CD8-positive, alpha-beta T cell (primary cell): ENCODE measurements at regions of chr10 and their contacts with region 1.

Region 1: DNA sequence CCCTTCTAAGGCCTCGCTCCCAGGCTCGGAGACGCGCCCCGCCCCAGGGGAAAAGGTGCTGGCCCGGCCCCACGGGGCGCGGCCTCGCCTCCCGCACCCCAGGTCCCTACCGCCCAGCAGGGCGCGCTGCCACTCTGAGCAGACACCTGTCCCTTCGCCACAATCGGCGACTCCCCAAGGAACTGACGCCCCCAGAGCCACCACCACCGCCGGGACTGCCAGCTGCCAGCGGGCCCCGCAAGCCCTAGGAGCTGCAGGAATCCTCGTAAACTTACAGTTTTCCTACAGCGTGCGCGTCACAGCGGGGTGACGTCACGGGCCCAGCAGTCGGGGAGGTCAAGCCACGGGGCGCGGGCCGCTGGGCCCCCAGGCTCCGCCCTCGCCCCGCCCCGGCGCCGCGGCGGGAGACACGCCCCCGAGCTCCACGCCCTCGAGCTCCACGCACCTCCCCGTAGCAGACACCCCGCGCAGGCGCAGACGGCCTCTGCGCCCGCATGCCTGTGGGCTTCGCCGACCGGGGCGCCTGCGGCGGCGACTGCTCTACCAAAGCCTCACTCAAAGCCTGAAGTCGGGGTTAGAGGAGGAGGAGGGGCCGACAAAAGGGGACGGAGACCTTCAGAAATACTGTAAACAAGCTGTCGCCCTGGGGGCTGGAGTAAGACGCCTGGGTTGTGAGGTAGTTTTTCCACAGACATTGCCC is at the start of gene ZNF438:
- DNase-seq: peak; percentile 91 to 98 (median 95)
- ATAC-seq: peak; percentile 81
- H3K4me3 ChIP-seq: peak within 1 kb of the TSS; percentile 74 to 98
- H3K4me3 Mint-ChIP-seq: peak within 1 kb of the TSS; percentile 90
- H3K27ac ChIP-seq: peak within 1 kb of the TSS; percentile 99 to 100
- H3K27ac Mint-ChIP-seq: peak within 1 kb of the TSS; percentile 99
- H3K4me1 ChIP-seq: peaks cover 20% of the 10 kb centered on the region
- H3K4me1 Mint-ChIP-seq: peaks cover 21% of the 10 kb centered on the region
- H3K27me3 ChIP-seq: no peaks in the 10 kb centered on the region
- H3K27me3 Mint-ChIP-seq: no peaks in the 10 kb centered on the region
- CTCF ChIP-seq: peak; percentile 59
- total RNA-seq, gene ZNF438: 1.5 to 1.7 TPM

Region 2: GRCh38 chr10:30155401-30155800 is 876.3 kb before region 1 on chr10:
- CTCF ChIA-PET with region 1: no interaction called
- POLR2A ChIA-PET with region 1: no interaction called
- intact Hi-C with region 1: no loop called
- DNase-seq: no peak
- ATAC-seq: no peak
- H3K4me3 ChIP-seq: no peak overlapping the region
- H3K4me3 Mint-ChIP-seq: no peak overlapping the region
- H3K27ac ChIP-seq: no peak overlapping the region
- H3K27ac Mint-ChIP-seq: no peak overlapping the region
- H3K4me1 ChIP-seq: no peaks in the 10 kb centered on the region
- H3K4me1 Mint-ChIP-seq: no peaks in the 10 kb centered on the region
- H3K27me3 ChIP-seq: no peaks in the 10 kb centered on the region
- H3K27me3 Mint-ChIP-seq: peaks cover 48% of the 10 kb centered on the region
- CTCF ChIP-seq: no peak

Region 3: GRCh38 chr10:30701451-30702173 is 330.1 kb before region 1 on chr10:
- CTCF ChIA-PET with region 1: no interaction called
- POLR2A ChIA-PET with region 1: interaction called, 3 read pairs
- intact Hi-C with region 1: loop called (anchors 5 kb)
- DNase-seq: peak; percentile 41 to 92 (median 74)
- ATAC-seq: peak; percentile 70
- H3K4me3 ChIP-seq: peak overlapping the region; percentile 1 to 43
- H3K4me3 Mint-ChIP-seq: peak overlapping the region; percentile 78
- H3K27ac ChIP-seq: peak overlapping the region; percentile 48 to 81
- H3K27ac Mint-ChIP-seq: peak overlapping the region; percentile 95
- H3K4me1 ChIP-seq: peaks cover 74% of the 10 kb centered on the region
- H3K4me1 Mint-ChIP-seq: peaks cover 83% of the 10 kb centered on the region
- H3K27me3 ChIP-seq: no peaks in the 10 kb centered on the region
- H3K27me3 Mint-ChIP-seq: no peaks in the 10 kb centered on the region
- CTCF ChIP-seq: no peak

Region 4: DNA sequence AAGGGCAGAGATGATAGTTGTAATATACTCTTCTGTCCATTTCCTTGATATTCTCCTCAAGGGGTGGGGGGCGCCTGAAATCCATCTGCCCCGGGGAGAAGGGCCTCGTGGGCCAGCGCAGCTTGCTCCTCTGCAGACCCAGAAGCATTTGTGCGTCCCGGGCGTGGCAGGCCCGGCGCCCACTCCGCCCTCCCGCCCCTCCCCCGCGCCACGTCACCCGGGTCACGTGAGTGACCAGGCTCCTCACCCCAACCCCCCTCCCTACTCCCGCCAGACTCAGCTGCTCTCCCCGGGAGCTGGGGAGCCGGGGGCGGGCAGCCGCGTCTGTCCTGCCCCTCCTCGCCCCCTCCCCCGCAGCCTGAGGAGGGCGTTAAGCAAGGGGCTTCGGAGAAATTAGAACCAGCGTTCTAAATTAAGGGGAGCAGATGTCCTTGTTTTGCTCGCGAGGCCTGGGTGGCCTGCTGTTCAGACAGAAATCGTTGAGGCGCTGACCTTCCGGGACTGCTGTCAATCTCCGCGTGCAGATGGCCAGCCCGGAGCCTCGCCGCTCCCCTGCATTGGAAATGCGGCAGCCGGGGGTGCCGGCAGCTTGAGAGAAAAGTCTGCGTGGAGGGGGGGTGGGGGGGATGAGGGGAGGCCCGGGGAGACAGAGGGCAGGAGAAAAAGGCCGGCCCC is 102.1 kb after region 1 on chr10:
- CTCF ChIA-PET with region 1: no interaction called
- POLR2A ChIA-PET with region 1: interaction called, 3 read pairs
- intact Hi-C with region 1: loop called (anchors 2 to 5 kb)
- DNase-seq: peak; percentile 37 to 84 (median 68)
- ATAC-seq: peak; percentile 70
- H3K4me3 ChIP-seq: peak overlapping the region; percentile 67 to 71
- H3K4me3 Mint-ChIP-seq: peak overlapping the region; percentile 81
- H3K27ac ChIP-seq: peak overlapping the region; percentile 33 to 65
- H3K27ac Mint-ChIP-seq: peak overlapping the region; percentile 76
- H3K4me1 ChIP-seq: peaks cover 32% of the 10 kb centered on the region
- H3K4me1 Mint-ChIP-seq: peaks cover 37% of the 10 kb centered on the region
- H3K27me3 ChIP-seq: no peaks in the 10 kb centered on the region
- H3K27me3 Mint-ChIP-seq: no peaks in the 10 kb centered on the region
- CTCF ChIP-seq: no peak

Region 5: DNA sequence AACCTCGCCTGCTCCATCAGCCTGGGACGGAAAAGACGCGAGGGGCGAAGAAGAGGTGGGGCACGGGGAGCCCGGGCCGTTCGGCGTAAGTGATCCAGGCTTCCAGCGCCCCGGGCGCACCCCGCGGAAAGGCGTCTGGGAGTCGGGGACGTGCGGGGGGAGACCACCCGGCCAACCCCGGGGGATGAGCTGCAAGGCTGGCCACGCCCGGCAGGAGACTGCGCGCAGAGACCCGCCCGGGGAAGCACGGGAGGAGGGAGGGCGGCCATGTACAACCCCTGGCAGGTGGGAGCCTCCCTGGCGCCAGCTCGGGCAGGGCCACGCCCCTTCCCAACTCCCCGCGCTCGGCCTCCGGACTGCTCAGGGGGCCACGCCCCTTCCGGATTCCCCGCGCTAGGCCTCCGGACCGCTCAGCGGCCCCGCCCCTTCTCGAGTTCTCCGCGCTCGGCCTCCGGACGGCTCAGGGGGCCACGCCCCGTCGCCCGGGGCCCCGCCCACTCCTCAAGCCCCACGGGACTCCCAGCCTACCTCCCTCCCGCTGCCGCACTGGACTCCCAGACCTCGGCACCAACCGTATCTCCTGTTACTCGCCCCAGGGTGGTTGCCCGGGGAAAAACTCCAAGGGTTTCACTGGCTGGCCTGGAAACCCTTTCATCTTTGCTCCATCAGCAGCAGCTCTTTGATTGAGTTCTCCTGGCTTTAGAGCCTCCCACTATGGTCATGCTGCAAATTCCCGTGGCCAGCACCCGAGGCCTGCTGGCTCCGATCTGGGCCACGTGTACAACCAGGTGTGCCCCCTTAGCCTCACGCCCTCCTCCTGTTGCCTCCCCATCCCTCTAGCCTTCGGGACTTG is 571.8 kb after region 1 on chr10:
- CTCF ChIA-PET with region 1: no interaction called
- POLR2A ChIA-PET with region 1: no interaction called
- intact Hi-C with region 1: loop called in 1 of 2 experiments (anchors 1 kb)
- DNase-seq: peak; percentile 12 to 80 (median 60)
- ATAC-seq: peak; percentile 80
- H3K4me3 ChIP-seq: peak overlapping the region; percentile 50 to 55
- H3K4me3 Mint-ChIP-seq: peak overlapping the region; percentile 88
- H3K27ac ChIP-seq: no peak overlapping the region
- H3K27ac Mint-ChIP-seq: no peak overlapping the region
- H3K4me1 ChIP-seq: peaks cover 8% of the 10 kb centered on the region
- H3K4me1 Mint-ChIP-seq: peaks cover 10% of the 10 kb centered on the region
- H3K27me3 ChIP-seq: no peaks in the 10 kb centered on the region
- H3K27me3 Mint-ChIP-seq: peaks cover 2% of the 10 kb centered on the region
- CTCF ChIP-seq: no peak

Region 6: GRCh38 chr10:31928549-31929260 is 897.0 kb after region 1 on chr10 and contains the start of gene ARHGAP12:
- CTCF ChIA-PET with region 1: no interaction called
- POLR2A ChIA-PET with region 1: no interaction called
- intact Hi-C with region 1: loop called in 1 of 2 experiments (anchors 10 kb)
- DNase-seq: peak; percentile 70 to 92 (median 84)
- ATAC-seq: peak; percentile 67
- H3K4me3 ChIP-seq: peak within 1 kb of the TSS; percentile 90 to 95
- H3K4me3 Mint-ChIP-seq: peak within 1 kb of the TSS; percentile 94
- H3K27ac ChIP-seq: peak within 1 kb of the TSS; percentile 65 to 87
- H3K27ac Mint-ChIP-seq: peak within 1 kb of the TSS; percentile 83
- H3K4me1 ChIP-seq: peaks cover 41% of the 10 kb centered on the region
- H3K4me1 Mint-ChIP-seq: peaks cover 49% of the 10 kb centered on the region
- H3K27me3 ChIP-seq: no peaks in the 10 kb centered on the region
- H3K27me3 Mint-ChIP-seq: no peaks in the 10 kb centered on the region
- CTCF ChIP-seq: no peak
- total RNA-seq, gene ARHGAP12: 15.7 to 15.9 TPM